ENCODE measurements at regions of chr6 and their contacts with region 1.

Region 1: GRCh38 chr6:53986165-53986720 is 125.0 kb upstream of the MLIP start:
- DNase-seq: peak in 1 of 2 experiments; percentile 43
- H3K4me3 ChIP-seq: no peak overlapping the region
- H3K27ac ChIP-seq: no peak overlapping the region
- H3K4me1 ChIP-seq: peaks cover 10% of the 10 kb centered on the region
- H3K27me3 ChIP-seq: no peaks in the 10 kb centered on the region
- CTCF ChIP-seq: peak; percentile 91

Region 2: DNA sequence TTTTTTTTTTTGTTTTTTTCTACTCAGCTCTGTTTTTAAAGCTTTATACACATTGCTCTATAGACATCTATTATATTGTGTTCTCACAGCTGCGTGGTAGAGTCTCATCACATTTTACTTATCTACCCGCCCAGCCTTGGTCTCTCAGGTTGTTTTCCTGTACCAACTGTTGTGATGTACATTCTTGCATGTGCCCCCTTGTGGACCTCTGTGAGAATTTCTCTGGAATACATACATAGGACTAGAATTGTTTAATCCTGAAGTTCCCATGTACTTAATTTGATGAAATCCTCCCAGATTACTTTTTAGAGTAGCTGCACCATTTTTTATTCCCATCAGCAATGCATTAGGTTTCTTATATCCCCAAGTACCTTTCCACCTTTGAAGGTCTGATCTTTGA is 281.6 kb after region 1 on chr6:
- CTCF ChIA-PET with region 1: interaction called, 4 read pairs
- POLR2A ChIA-PET with region 1: no interaction called
- intact Hi-C with region 1: loop called (anchors 2 kb)
- DNase-seq: peak in 1 of 2 experiments; percentile 2
- H3K4me3 ChIP-seq: no peak overlapping the region
- H3K27ac ChIP-seq: no peak overlapping the region
- H3K4me1 ChIP-seq: no peaks in the 10 kb centered on the region
- H3K27me3 ChIP-seq: no peaks in the 10 kb centered on the region
- CTCF ChIP-seq: peak; percentile 65

Region 3: GRCh38 chr6:54697424-54697823 is 711.2 kb after region 1 on chr6:
- CTCF ChIA-PET with region 1: no interaction called
- POLR2A ChIA-PET with region 1: no interaction called
- intact Hi-C with region 1: loop called (anchors 10 kb)
- DNase-seq: no peak
- H3K4me3 ChIP-seq: no peak overlapping the region
- H3K27ac ChIP-seq: no peak overlapping the region
- H3K4me1 ChIP-seq: peaks cover 22% of the 10 kb centered on the region
- H3K27me3 ChIP-seq: no peaks in the 10 kb centered on the region
- CTCF ChIP-seq: no peak; the same call in 1 of the 2 replicates

Region 4: DNA sequence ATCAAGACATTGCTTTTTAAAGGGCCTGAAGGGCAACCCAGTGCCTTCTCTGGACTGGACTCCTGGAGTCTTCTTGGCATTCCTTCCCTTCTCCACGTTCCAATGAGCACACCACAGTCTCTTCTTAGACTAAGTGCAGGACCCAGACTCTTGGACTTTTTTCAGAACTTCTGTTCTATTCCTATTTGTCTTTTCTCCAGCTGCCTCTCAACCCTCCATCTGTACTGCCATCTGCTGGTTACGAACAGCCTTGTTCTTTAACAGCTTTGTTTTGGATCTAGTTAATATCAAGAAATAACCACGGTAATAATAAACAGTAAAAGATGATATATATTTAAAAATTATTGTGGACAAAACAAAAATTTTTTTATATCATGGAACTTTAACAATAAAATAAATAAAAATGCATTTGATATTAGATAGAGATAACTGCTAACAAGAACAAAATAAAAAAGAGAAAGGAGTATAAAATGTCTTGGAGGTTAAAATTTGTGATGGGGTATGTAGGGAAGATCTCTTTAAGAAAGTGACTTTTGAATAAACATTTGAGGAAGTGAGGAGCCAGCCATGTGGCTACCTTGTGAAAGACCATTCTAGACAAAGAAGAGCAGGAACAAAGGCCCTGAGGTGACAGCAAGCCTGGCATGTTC is 1083.0 kb after region 1 on chr6:
- CTCF ChIA-PET with region 1: no interaction called
- POLR2A ChIA-PET with region 1: no interaction called
- intact Hi-C with region 1: loop called (anchors 2 kb)
- DNase-seq: peak in 1 of 2 experiments; percentile 18
- H3K4me3 ChIP-seq: no peak overlapping the region
- H3K27ac ChIP-seq: no peak overlapping the region
- H3K4me1 ChIP-seq: no peaks in the 10 kb centered on the region
- H3K27me3 ChIP-seq: no peaks in the 10 kb centered on the region
- CTCF ChIP-seq: peak; percentile 86

Region 5: GRCh38 chr6:55239099-55239498 is 1252.9 kb after region 1 on chr6:
- CTCF ChIA-PET with region 1: no interaction called
- POLR2A ChIA-PET with region 1: no interaction called
- intact Hi-C with region 1: loop called (anchors 2 kb)
- DNase-seq: peak in 1 of 2 experiments; percentile 15
- H3K4me3 ChIP-seq: no peak overlapping the region
- H3K27ac ChIP-seq: no peak overlapping the region
- H3K4me1 ChIP-seq: no peaks in the 10 kb centered on the region
- H3K27me3 ChIP-seq: no peaks in the 10 kb centered on the region
- CTCF ChIP-seq: no peak